Adrenal gland (tissue), 19 donors: ENCODE measurements at regions of chr1 and their contacts with region 1.

Region 1: DNA sequence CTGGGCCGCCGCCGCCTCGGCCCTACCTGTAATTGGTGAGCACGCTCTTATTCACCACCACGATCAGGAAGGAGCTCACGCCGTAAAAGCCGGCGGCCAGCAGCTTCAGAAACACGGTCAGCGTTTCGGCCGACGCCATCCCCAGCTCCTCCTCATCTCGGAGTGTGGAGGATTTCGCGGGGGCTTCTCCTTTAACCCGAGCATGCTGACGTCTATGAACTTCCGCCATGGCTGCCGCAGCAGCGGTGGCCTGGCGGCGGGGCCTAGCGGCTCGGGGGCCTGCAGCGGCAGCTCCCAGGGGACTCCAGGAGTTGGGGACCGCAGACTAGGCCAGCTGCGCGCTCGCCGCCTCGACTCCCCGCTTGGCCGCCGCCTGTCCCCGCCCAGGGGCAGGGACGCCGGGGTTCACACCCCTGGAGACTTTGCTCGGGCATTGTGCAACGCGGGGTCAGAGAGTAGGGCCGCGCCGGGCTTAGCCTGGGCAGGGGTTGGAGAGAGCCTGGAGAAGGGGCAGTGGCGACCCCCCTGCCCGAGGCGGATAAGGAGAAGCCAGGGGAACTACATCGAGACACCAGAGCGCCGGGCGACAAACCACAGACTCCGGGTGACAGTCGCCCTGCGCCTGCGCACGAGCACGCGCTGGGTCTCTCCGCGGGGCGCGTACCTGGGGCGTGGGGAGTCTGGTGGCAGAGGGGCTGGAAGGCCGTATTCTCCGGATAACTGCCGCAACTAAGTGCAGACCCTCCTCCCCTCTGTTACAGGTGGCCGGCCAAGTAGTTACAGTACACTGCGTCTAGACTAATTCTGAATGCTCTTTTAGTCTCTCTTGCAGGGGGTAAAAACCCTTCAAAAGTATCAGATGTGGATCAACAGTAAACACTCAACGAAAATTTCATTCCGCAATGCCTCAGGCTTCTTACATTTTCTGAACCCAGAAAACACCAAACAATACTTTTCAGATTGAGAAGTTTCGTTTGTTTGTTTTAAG is at the start of gene SLC35D1:
- DNase-seq: peak; percentile 62 to 75 (median 69)
- H3K4me3 ChIP-seq: peak within 1 kb of the TSS; percentile 71 to 82 (median 72)
- H3K27ac ChIP-seq: peak within 1 kb of the TSS; percentile 69 to 95 (median 94)
- H3K4me1 ChIP-seq: peaks cover 5 to 7% of the 10 kb centered on the region in 2 donors
- H3K27me3 ChIP-seq: no peaks in the 10 kb centered on the region
- CTCF ChIP-seq: peak in 1 of 6 experiments; percentile 2
- POLR2A ChIP-seq: peak; percentile 62 to 74
- total RNA-seq, gene SLC35D1: 9.4 to 34.7 (median 14.0) TPM

Region 2: DNA sequence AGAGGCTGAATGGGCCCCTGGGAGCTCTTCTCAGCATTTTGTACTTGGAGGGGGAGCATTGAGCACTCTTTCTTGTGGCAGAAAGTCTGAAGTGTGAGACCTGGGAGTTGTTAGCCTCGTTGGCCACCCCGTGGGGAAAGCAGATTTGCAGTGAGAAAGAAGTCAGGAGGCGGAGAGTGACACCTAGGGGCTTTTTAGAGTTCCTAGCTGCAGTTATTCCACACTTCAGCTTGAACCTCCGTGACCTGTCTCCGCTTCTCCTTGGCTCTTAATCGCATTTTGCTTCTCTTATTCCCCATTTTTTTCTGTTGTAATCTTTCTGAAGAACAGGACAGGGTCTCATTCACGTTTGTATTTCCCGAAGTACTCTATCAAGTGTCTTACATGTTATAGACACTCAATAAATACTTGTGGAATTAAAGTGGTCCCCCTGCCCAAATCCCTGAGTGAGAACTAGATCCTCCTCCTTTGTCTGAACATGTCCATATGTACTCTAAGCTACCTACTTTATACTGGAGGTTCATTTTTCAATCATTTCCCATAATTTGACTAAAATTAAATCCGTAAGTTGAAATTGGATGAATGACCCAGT is 95.2 kb after region 1 on chr1:
- intact Hi-C with region 1: loop called in 1 of 2 experiments (anchors 10 kb)
- DNase-seq: peak; percentile 69 to 85 (median 78)
- H3K4me3 ChIP-seq: peak overlapping the region in 1 of 4 donors; percentile 1
- H3K27ac ChIP-seq: no peak overlapping the region
- H3K4me1 ChIP-seq: peaks cover 0 to 6% of the 10 kb centered on the region in 2 donors
- H3K27me3 ChIP-seq: no peaks in the 10 kb centered on the region
- CTCF ChIP-seq: peak; percentile 37 to 95 (median 82)
- POLR2A ChIP-seq: no peak